ENCODE measurements at regions of chr1 and their contacts with region 1.

Region 1: GRCh38 chr1:97820470-97821188 is 100.2 kb downstream of the DPYD start:
- DNase-seq: peak; percentile 29
- ATAC-seq: peak; percentile 72
- H3K4me3 ChIP-seq: no peak overlapping the region
- H3K27ac ChIP-seq: no peak overlapping the region
- H3K4me1 ChIP-seq: no peaks in the 10 kb centered on the region
- H3K27me3 ChIP-seq: no peaks in the 10 kb centered on the region
- CTCF ChIP-seq: peak; percentile 30 to 67 (median 38); a peak in 5 of 6 replicates
- POLR2A ChIP-seq: no peak
- RAD21 ChIP-seq: peak; percentile 73

Region 2: DNA sequence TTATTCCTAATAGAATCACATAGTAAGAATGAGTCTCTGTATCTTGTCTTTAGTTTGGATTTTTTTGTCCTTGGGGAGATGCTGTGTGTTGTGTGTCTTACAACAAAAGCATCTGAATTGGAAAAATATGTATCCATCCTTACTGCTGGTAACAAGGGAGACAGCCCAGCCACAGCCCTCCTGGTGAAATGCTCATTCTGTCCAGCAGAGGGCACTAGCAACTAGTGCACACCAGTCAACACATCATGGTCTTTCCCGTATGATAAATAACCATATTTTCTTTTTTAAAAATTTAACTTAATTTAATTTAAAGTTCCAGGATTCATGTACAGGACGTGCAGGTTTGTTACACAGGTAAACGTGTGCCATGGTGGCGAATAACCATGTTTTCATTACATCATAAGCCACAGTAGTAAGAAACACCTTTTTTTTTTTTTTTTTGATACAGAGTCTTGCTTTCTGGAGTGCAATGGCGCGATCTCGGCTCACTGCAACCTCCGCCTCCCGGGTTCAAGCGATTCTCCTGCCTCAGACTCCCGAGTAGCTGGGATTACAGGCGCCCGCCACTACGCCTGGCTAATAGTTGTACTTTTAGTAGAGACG is 854.0 kb before region 1 on chr1:
- CTCF ChIA-PET with region 1: no interaction called
- POLR2A ChIA-PET with region 1: no interaction called
- RAD21 ChIA-PET with region 1: no interaction called
- intact Hi-C with region 1: loop called (anchors 1 kb)
- DNase-seq: peak; percentile 59
- ATAC-seq: peak; percentile 94
- H3K4me3 ChIP-seq: no peak overlapping the region
- H3K27ac ChIP-seq: no peak overlapping the region
- H3K4me1 ChIP-seq: no peaks in the 10 kb centered on the region
- H3K27me3 ChIP-seq: no peaks in the 10 kb centered on the region
- CTCF ChIP-seq: peak; percentile 40 to 90 (median 72); a peak in 5 of 6 replicates
- POLR2A ChIP-seq: no peak
- RAD21 ChIP-seq: peak; percentile 73